ENCODE measurements at regions of chr9 and their contacts with region 1.

Region 1: GRCh38 chr9:111427186-111427585 is 57.0 kb downstream of the ECPAS start:
- DNase-seq: peak; percentile 5
- H3K4me3 ChIP-seq: no peak overlapping the region
- H3K27ac ChIP-seq: no peak overlapping the region
- H3K4me1 ChIP-seq: no peaks in the 10 kb centered on the region
- H3K27me3 ChIP-seq: no peaks in the 10 kb centered on the region
- CTCF ChIP-seq: no peak

Region 2: GRCh38 chr9:111375817-111376564 is 51.2 kb before region 1 on chr9:
- CTCF ChIA-PET with region 1: no interaction called
- dilution Hi-C with region 1: no loop called
- in situ Hi-C with region 1: no loop called
- intact Hi-C with region 1: loop called (anchors 5 kb)
- DNase-seq: peak; percentile 48
- H3K4me3 ChIP-seq: no peak overlapping the region
- H3K27ac ChIP-seq: peak overlapping the region; percentile 20
- H3K4me1 ChIP-seq: peaks cover 18% of the 10 kb centered on the region
- H3K27me3 ChIP-seq: no peaks in the 10 kb centered on the region
- CTCF ChIP-seq: no peak

Region 3: GRCh38 chr9:111438541-111439235 is 11.5 kb after region 1 on chr9:
- CTCF ChIA-PET with region 1: no interaction called
- dilution Hi-C with region 1: no loop called
- in situ Hi-C with region 1: no loop called
- intact Hi-C with region 1: loop called (anchors 1 kb)
- DNase-seq: no peak
- H3K4me3 ChIP-seq: no peak overlapping the region
- H3K27ac ChIP-seq: no peak overlapping the region
- H3K4me1 ChIP-seq: no peaks in the 10 kb centered on the region
- H3K27me3 ChIP-seq: no peaks in the 10 kb centered on the region
- CTCF ChIP-seq: no peak

Region 4: DNA sequence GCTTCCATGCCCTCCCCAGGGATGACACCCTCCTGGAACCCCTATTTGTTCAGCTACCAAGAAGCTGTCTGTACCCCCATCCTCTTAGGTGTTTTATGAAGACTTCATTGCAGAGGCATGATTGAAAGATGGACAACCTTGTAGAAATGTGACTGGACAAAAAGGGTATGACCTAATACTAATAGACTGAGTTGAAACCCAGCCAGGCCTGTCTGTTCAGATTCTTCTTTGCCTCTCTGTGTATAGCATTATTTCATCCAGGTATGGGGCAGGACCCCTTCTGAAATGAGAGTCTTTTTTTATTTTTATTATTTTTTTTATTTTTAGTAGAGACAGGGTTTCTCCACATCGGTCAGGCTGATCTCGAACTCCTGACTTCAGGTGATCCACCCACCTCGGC is 64.2 kb after region 1 on chr9:
- CTCF ChIA-PET with region 1: no interaction called
- dilution Hi-C with region 1: no loop called
- in situ Hi-C with region 1: no loop called
- intact Hi-C with region 1: no loop called
- DNase-seq: no peak
- H3K4me3 ChIP-seq: no peak overlapping the region
- H3K27ac ChIP-seq: no peak overlapping the region
- H3K4me1 ChIP-seq: no peaks in the 10 kb centered on the region
- H3K27me3 ChIP-seq: no peaks in the 10 kb centered on the region
- CTCF ChIP-seq: no peak